MCF 10A (cell line): ENCODE measurements at regions of chr12 and their contacts with region 1.

Region 1: GRCh38 chr12:46933947-46934346 is 108.2 kb upstream of the SLC38A4 start:
- DNase-seq: peak; percentile 68
- H3K4me3 Mint-ChIP-seq: no peak overlapping the region
- H3K27ac Mint-ChIP-seq: no peak overlapping the region
- H3K4me1 Mint-ChIP-seq: peaks cover 6% of the 10 kb centered on the region
- H3K27me3 Mint-ChIP-seq: no peaks in the 10 kb centered on the region
- CTCF ChIP-seq: peak; percentile 71

Region 2: GRCh38 chr12:46071769-46072624 is 862.0 kb before region 1 on chr12:
- CTCF ChIA-PET with region 1: no interaction called
- POLR2A ChIA-PET with region 1: interaction called, 3 read pairs
- intact Hi-C with region 1: loop called (anchors 1 kb)
- DNase-seq: peak; percentile 87
- H3K4me3 Mint-ChIP-seq: no peak overlapping the region
- H3K27ac Mint-ChIP-seq: peak overlapping the region; percentile 47
- H3K4me1 Mint-ChIP-seq: peaks cover 20% of the 10 kb centered on the region
- H3K27me3 Mint-ChIP-seq: no peaks in the 10 kb centered on the region
- CTCF ChIP-seq: peak; percentile 95

Region 3: DNA sequence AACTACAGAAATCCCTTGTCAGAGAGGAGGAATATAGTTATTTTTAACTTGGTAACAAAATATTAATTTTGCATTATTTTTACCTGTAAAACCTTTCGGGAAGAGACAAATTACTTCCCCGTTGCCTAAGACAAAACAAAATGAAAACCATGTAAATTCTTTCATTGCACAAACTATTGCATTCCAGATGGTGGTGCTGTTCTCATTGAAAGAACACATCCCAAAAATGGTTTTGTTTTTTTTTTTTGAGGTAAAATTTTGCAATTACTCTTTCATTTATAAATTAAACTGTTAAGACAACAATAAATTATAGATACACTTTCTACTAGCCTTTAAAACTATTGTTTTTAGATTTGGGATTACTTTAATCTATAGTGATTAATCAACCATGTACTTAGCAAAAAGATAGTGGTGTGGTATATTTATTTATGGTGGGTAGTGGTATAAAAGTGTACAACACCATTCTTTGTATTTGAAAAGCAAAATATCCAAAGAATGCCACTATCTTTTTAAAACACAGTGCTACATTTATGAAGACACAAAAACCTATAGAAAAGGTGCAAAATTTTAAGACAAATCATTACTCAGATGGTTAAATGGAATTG is 780.6 kb before region 1 on chr12:
- CTCF ChIA-PET with region 1: interaction called, 6 read pairs
- POLR2A ChIA-PET with region 1: interaction called, 3 read pairs
- intact Hi-C with region 1: loop called (anchors 1 kb)
- DNase-seq: peak; percentile 46
- H3K4me3 Mint-ChIP-seq: no peak overlapping the region
- H3K27ac Mint-ChIP-seq: no peak overlapping the region
- H3K4me1 Mint-ChIP-seq: peaks cover 5% of the 10 kb centered on the region
- H3K27me3 Mint-ChIP-seq: no peaks in the 10 kb centered on the region
- CTCF ChIP-seq: peak; percentile 77

Region 4: GRCh38 chr12:46556105-46556559 is 377.8 kb before region 1 on chr12:
- CTCF ChIA-PET with region 1: no interaction called
- POLR2A ChIA-PET with region 1: no interaction called
- intact Hi-C with region 1: loop called (anchors 5 kb)
- DNase-seq: peak; percentile 85
- H3K4me3 Mint-ChIP-seq: peak overlapping the region; percentile 17
- H3K27ac Mint-ChIP-seq: peak overlapping the region; percentile 68
- H3K4me1 Mint-ChIP-seq: peaks cover 73% of the 10 kb centered on the region
- H3K27me3 Mint-ChIP-seq: no peaks in the 10 kb centered on the region
- CTCF ChIP-seq: no peak

Region 5: GRCh38 chr12:46921764-46922133 is 12.2 kb before region 1 on chr12:
- CTCF ChIA-PET with region 1: interaction called, 34 read pairs
- POLR2A ChIA-PET with region 1: no interaction called
- intact Hi-C with region 1: no loop called
- DNase-seq: peak; percentile 24
- H3K4me3 Mint-ChIP-seq: no peak overlapping the region
- H3K27ac Mint-ChIP-seq: peak overlapping the region; percentile 71
- H3K4me1 Mint-ChIP-seq: peaks cover 13% of the 10 kb centered on the region
- H3K27me3 Mint-ChIP-seq: no peaks in the 10 kb centered on the region
- CTCF ChIP-seq: no peak

Region 6: GRCh38 chr12:46952880-46953517 is 19.1 kb after region 1 on chr12:
- CTCF ChIA-PET with region 1: interaction called, 12 read pairs
- POLR2A ChIA-PET with region 1: no interaction called
- intact Hi-C with region 1: no loop called
- DNase-seq: no peak
- H3K4me3 Mint-ChIP-seq: no peak overlapping the region
- H3K27ac Mint-ChIP-seq: no peak overlapping the region
- H3K4me1 Mint-ChIP-seq: no peaks in the 10 kb centered on the region
- H3K27me3 Mint-ChIP-seq: no peaks in the 10 kb centered on the region
- CTCF ChIP-seq: no peak

Region 7: DNA sequence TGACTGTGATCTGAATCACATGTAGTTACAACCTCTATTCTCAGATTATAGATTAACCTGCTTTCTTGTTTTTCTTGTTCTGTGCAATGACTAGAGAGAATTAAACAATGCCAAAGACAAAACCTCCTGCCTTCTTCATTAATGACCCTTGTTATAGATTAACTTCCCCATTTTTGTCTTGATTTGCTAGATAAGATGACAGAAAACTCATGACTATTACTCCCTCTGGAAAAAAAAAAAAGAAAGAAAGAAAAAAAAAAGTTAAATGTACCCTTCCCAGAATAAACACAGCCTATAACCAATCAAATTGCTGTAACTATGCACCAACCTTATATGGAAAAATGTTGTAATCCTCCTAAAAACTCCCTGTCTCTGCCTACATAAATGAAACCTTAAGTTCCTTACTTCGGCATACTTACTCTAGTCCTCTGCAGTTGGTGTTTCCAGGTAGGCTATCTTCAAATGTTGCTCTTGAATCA is 104.4 kb after region 1 on chr12:
- CTCF ChIA-PET with region 1: no interaction called
- POLR2A ChIA-PET with region 1: no interaction called
- intact Hi-C with region 1: no loop called
- DNase-seq: no peak
- H3K4me3 Mint-ChIP-seq: no peak overlapping the region
- H3K27ac Mint-ChIP-seq: no peak overlapping the region
- H3K4me1 Mint-ChIP-seq: peaks cover 8% of the 10 kb centered on the region
- H3K27me3 Mint-ChIP-seq: no peaks in the 10 kb centered on the region
- CTCF ChIP-seq: no peak

Region 8: GRCh38 chr12:47080792-47081502 is 147.0 kb after region 1 on chr12:
- CTCF ChIA-PET with region 1: no interaction called
- POLR2A ChIA-PET with region 1: no interaction called
- intact Hi-C with region 1: no loop called
- DNase-seq: peak; percentile 89
- H3K4me3 Mint-ChIP-seq: peak overlapping the region; percentile 92
- H3K27ac Mint-ChIP-seq: no peak overlapping the region
- H3K4me1 Mint-ChIP-seq: peaks cover 66% of the 10 kb centered on the region
- H3K27me3 Mint-ChIP-seq: no peaks in the 10 kb centered on the region
- CTCF ChIP-seq: no peak